K562 (cell line): ENCODE measurements at regions of chr5 and their contacts with region 1.

Region 1: DNA sequence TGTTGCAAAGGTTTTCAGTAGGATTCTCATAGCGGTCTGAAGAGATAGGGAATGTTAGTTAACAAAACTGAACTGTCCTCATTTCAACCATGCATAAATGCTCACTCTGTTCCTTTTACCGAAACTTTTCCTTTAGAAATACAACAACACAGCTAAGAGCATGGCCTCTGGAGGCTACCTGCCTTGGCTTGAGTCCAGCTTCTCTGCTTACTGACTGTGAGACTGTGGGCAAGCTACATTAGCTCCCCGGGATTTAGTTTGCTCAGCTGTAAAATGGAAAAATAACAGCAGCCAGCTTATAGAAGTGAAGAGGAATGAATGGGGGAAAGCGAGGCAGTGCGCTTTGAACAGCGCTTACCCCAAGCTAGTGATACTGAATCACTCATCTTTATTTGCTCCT is 507.9 kb upstream of the DAP start:
- DNase-seq: no peak
- ATAC-seq: no peak
- H3K4me3 ChIP-seq: no peak overlapping the region
- H3K27ac ChIP-seq: no peak overlapping the region
- H3K4me1 ChIP-seq: no peaks in the 10 kb centered on the region
- H3K27me3 ChIP-seq: no peaks in the 10 kb centered on the region
- CTCF ChIP-seq: no peak
- EP300 ChIP-seq: no peak
- POLR2A ChIP-seq: no peak
- RAD21 ChIP-seq: no peak

Region 2: GRCh38 chr5:11494340-11494739 is 225.4 kb after region 1 on chr5:
- CTCF ChIA-PET with region 1: interaction called, 4 read pairs
- POLR2A ChIA-PET with region 1: no interaction called
- in situ Hi-C with region 1: no loop called
- intact Hi-C with region 1: loop called (anchors 10 kb)
- DNase-seq: no peak
- ATAC-seq: no peak
- H3K4me3 ChIP-seq: no peak overlapping the region
- H3K27ac ChIP-seq: no peak overlapping the region
- H3K4me1 ChIP-seq: no peaks in the 10 kb centered on the region
- H3K27me3 ChIP-seq: no peaks in the 10 kb centered on the region
- CTCF ChIP-seq: peak in 1 of 3 experiments; percentile 49; a peak in 2 of 6 replicates
- EP300 ChIP-seq: no peak
- POLR2A ChIP-seq: no peak
- RAD21 ChIP-seq: peak in 1 of 2 experiments; percentile 24; a peak in 1 of 4 replicates

Region 3: GRCh38 chr5:12023614-12024241 is 754.8 kb after region 1 on chr5:
- CTCF ChIA-PET with region 1: no interaction called
- POLR2A ChIA-PET with region 1: no interaction called
- in situ Hi-C with region 1: no loop called
- intact Hi-C with region 1: loop called (anchors 10 kb)
- DNase-seq: peak in 3 of 4 experiments; percentile 4 to 44 (median 14)
- ATAC-seq: no peak
- H3K4me3 ChIP-seq: no peak overlapping the region
- H3K27ac ChIP-seq: no peak overlapping the region
- H3K4me1 ChIP-seq: no peaks in the 10 kb centered on the region
- H3K27me3 ChIP-seq: no peaks in the 10 kb centered on the region
- CTCF ChIP-seq: peak in 2 of 3 experiments; percentile 33 to 51; a peak in 2 of 6 replicates
- EP300 ChIP-seq: no peak
- POLR2A ChIP-seq: no peak
- RAD21 ChIP-seq: peak; percentile 37 to 61